Activated naive CD4-positive, alpha-beta T cell treated with anti-CD3 and anti-CD28 coated beads for 36 hours (primary cell): ENCODE measurements at regions of chr5 and their contacts with region 1.

Region 1: GRCh38 chr5:69042915-69043658 is 50.7 kb upstream of the SLC30A5 start:
- DNase-seq: peak; percentile 90
- H3K4me3 Mint-ChIP-seq: peak overlapping the region; percentile 73
- H3K27ac Mint-ChIP-seq: peak overlapping the region; percentile 84
- H3K4me1 Mint-ChIP-seq: peaks cover 9% of the 10 kb centered on the region
- H3K27me3 Mint-ChIP-seq: no peaks in the 10 kb centered on the region

Region 2: DNA sequence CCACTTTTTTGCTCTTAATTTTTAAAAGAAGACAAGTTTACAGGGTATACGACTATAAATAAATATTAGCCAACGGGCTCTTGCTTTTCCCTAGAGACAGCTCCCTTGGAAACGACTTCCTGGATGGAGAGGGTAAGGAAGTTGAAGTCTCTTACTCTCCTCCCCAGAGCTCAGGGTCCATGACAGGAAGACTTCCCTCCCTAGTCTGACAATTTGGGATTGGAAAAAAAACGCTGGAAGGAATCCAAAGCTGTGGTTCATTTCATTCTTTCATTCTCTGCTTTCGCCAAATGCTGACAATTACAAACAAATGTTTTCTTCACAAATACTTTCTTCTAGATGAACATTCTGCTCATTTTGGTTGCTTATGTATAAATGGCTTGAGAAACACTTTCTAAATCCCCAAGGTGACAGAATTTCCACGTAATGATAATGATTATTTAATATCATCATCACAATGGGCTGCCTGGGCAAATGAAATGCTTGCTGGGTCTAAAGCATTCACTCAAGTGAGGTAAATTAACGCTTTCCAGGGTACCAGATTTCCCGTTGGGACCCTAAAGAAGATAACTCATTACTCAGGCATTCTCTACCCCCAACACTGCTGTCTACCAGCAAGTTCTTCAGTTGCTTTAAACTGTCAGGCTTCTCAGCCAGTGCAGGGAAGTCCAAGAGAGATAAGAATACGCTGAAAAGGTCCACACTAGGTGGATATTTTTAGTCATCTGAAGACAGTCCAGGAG is 89.0 kb before region 1 on chr5:
- CTCF ChIA-PET with region 1: no interaction called
- intact Hi-C with region 1: no loop called
- DNase-seq: no peak
- H3K4me3 Mint-ChIP-seq: no peak overlapping the region
- H3K27ac Mint-ChIP-seq: no peak overlapping the region
- H3K4me1 Mint-ChIP-seq: no peaks in the 10 kb centered on the region
- H3K27me3 Mint-ChIP-seq: no peaks in the 10 kb centered on the region

Region 3: GRCh38 chr5:69024241-69024651 is 18.8 kb before region 1 on chr5:
- CTCF ChIA-PET with region 1: interaction called, 5 read pairs
- intact Hi-C with region 1: loop called (anchors 1 kb)
- DNase-seq: peak; percentile 46
- H3K4me3 Mint-ChIP-seq: no peak overlapping the region
- H3K27ac Mint-ChIP-seq: no peak overlapping the region
- H3K4me1 Mint-ChIP-seq: peaks cover 2% of the 10 kb centered on the region
- H3K27me3 Mint-ChIP-seq: peaks cover 2% of the 10 kb centered on the region

Region 4: DNA sequence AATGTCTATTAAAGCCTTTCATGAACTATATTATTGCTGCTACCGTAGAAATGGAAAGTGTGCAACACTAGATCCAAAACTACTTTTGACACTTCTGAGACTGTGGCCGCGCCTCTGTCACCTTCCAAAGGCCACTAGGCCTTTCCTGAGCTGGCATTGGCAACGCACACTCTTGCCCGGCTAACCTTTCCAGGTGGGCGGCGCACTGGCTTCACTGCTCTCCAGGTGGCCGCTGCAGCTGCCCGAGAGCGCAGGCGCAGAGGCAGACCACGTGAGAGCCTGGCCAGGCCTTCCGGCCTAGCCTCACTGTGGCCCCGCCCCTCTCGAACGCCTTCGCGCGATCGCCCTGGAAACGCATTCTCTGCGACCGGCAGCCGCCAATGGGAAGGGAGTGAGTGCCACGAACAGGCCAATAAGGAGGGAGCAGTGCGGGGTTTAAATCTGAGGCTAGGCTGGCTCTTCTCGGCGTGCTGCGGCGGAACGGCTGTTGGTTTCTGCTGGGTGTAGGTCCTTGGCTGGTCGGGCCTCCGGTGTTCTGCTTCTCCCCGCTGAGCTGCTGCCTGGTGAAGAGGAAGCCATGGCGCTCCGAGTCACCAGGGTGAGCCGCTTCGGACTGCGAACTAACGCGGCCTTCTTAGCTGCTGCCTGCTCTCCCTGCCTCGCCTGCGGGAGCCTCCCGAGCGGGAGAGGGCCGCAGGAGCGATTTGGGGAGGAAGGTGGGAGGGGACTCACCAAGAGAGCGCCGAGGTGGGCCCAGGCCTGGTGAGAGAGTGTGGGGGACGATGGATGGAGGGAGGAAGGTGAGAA is 123.8 kb after region 1 on chr5 and contains the start of gene CCNB1:
- CTCF ChIA-PET with region 1: no interaction called
- intact Hi-C with region 1: loop called (anchors 2 kb)
- DNase-seq: peak; percentile 99
- H3K4me3 Mint-ChIP-seq: peak within 1 kb of the TSS; percentile 95
- H3K27ac Mint-ChIP-seq: peak within 1 kb of the TSS; percentile 87
- H3K4me1 Mint-ChIP-seq: peaks cover 20% of the 10 kb centered on the region
- H3K27me3 Mint-ChIP-seq: no peaks in the 10 kb centered on the region
- total RNA-seq, gene CCNB1: 209 to 211 TPM

Region 5: GRCh38 chr5:69234457-69235268 is 191.6 kb after region 1 on chr5 and contains the start of gene CDK7:
- CTCF ChIA-PET with region 1: interaction called, 4 read pairs
- intact Hi-C with region 1: loop called (anchors 5 kb)
- DNase-seq: peak; percentile 95
- H3K4me3 Mint-ChIP-seq: peak within 1 kb of the TSS; percentile 97
- H3K27ac Mint-ChIP-seq: peak within 1 kb of the TSS; percentile 77
- H3K4me1 Mint-ChIP-seq: peaks cover 33% of the 10 kb centered on the region
- H3K27me3 Mint-ChIP-seq: no peaks in the 10 kb centered on the region
- total RNA-seq, gene CDK7: 23.8 to 28.4 TPM

Region 6: GRCh38 chr5:69308046-69308553 is 265.0 kb after region 1 on chr5:
- CTCF ChIA-PET with region 1: no interaction called
- intact Hi-C with region 1: no loop called
- DNase-seq: no peak
- H3K4me3 Mint-ChIP-seq: no peak overlapping the region
- H3K27ac Mint-ChIP-seq: no peak overlapping the region
- H3K4me1 Mint-ChIP-seq: peaks cover 7% of the 10 kb centered on the region
- H3K27me3 Mint-ChIP-seq: no peaks in the 10 kb centered on the region

Region 7: DNA sequence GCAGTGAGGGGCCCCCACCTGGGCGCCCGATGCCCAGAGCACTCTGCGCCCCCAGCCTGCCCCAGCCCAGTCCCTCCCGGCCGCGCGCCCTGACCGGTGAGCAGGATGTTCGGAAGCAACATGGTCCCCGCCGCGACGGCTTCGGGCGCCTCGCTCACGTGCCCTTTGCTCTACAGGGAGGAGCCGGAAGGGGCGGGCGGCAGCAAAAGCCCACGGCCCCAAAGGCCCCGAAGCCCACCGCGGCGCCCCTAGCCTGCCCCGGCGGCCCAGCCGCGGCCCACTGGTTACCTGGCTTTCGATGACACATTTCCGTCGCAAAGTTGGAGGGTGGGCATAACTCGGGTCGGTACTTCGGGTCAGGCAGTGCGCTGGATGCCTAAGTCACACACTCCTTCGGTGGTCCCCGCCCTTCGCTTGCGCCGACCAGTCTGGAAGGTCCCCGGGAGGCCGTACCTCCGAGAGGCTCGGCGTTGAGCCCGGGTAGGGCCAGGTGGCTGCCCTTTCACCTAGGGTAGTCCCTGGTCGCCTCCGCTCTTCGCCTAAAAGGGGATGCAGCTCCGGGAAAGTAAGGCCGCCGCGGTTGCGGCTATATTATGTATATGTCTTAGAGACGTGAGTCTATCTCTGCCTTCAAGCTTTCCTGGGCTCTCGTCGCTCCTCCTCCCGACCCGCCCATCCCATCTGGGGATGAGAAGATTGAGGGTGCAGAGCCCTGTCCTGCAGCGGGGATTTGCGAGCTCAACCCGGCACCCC is 326.5 kb after region 1 on chr5 and contains the starts of genes AK6, RAD17 and TAF9:
- CTCF ChIA-PET with region 1: interaction called, 4 read pairs
- intact Hi-C with region 1: loop called (anchors 1 kb)
- DNase-seq: peak; percentile 94
- H3K4me3 Mint-ChIP-seq: peak within 1 kb of the TSS; percentile 96
- H3K27ac Mint-ChIP-seq: peak within 1 kb of the TSS; percentile 96
- H3K4me1 Mint-ChIP-seq: peaks cover 42% of the 10 kb centered on the region
- H3K27me3 Mint-ChIP-seq: no peaks in the 10 kb centered on the region
- total RNA-seq, gene AK6: 102 to 103 TPM
- total RNA-seq, gene RAD17: 24.1 to 26.2 TPM
- total RNA-seq, gene TAF9: 74.9 to 79.1 TPM